B cell (primary cell): ENCODE measurements at regions of chr1 and their contacts with region 1.

Region 1: GRCh38 chr1:226051356-226051755 is 11.2 kb upstream of the H3-3A start:
- DNase-seq: no peak
- ATAC-seq: no peak
- H3K4me3 ChIP-seq: no peak overlapping the region
- H3K4me3 Mint-ChIP-seq: no peak overlapping the region
- H3K27ac ChIP-seq: no peak overlapping the region
- H3K27ac Mint-ChIP-seq: no peak overlapping the region
- H3K4me1 ChIP-seq: no peaks in the 10 kb centered on the region
- H3K4me1 Mint-ChIP-seq: no peaks in the 10 kb centered on the region
- H3K27me3 ChIP-seq: no peaks in the 10 kb centered on the region
- H3K27me3 Mint-ChIP-seq: no peaks in the 10 kb centered on the region
- CTCF ChIP-seq: no peak

Region 2: GRCh38 chr1:225485991-225486530 is 565.3 kb before region 1 on chr1:
- CTCF ChIA-PET with region 1: no interaction called
- POLR2A ChIA-PET with region 1: interaction called, 12 read pairs
- intact Hi-C with region 1: no loop called
- DNase-seq: no peak
- ATAC-seq: no peak
- H3K4me3 ChIP-seq: no peak overlapping the region
- H3K4me3 Mint-ChIP-seq: no peak overlapping the region
- H3K27ac ChIP-seq: no peak overlapping the region
- H3K27ac Mint-ChIP-seq: no peak overlapping the region
- H3K4me1 ChIP-seq: peaks cover 8 to 11% of the 10 kb centered on the region in 2 donors
- H3K4me1 Mint-ChIP-seq: peaks cover 16% of the 10 kb centered on the region
- H3K27me3 ChIP-seq: no peaks in the 10 kb centered on the region
- H3K27me3 Mint-ChIP-seq: peaks cover 3% of the 10 kb centered on the region
- CTCF ChIP-seq: no peak

Region 3: DNA sequence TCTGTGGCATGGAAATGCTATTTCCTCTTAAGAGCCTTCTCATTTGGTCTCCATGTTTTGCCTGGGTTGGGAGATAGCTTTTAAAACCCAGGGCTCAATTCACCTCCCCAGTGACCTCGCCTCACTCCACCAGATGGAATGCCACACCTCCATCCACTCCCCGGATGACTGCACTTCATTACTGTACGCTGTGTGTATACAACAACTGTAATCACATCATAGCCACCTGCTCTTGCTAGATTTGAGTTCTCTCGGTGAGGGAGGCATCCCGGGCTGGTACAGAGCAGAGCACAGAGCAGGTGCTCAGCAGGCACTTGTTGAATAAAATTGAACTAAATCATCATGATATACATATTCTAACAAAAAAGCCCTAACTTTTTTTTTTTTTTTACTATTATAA is 78.2 kb before region 1 on chr1:
- CTCF ChIA-PET with region 1: no interaction called
- POLR2A ChIA-PET with region 1: no interaction called
- intact Hi-C with region 1: no loop called
- DNase-seq: no peak
- ATAC-seq: no peak
- H3K4me3 ChIP-seq: no peak overlapping the region
- H3K4me3 Mint-ChIP-seq: no peak overlapping the region
- H3K27ac ChIP-seq: no peak overlapping the region
- H3K27ac Mint-ChIP-seq: no peak overlapping the region
- H3K4me1 ChIP-seq: peaks cover 10 to 17% of the 10 kb centered on the region in 2 donors
- H3K4me1 Mint-ChIP-seq: peaks cover 14% of the 10 kb centered on the region
- H3K27me3 ChIP-seq: no peaks in the 10 kb centered on the region
- H3K27me3 Mint-ChIP-seq: no peaks in the 10 kb centered on the region
- CTCF ChIP-seq: no peak

Region 4: DNA sequence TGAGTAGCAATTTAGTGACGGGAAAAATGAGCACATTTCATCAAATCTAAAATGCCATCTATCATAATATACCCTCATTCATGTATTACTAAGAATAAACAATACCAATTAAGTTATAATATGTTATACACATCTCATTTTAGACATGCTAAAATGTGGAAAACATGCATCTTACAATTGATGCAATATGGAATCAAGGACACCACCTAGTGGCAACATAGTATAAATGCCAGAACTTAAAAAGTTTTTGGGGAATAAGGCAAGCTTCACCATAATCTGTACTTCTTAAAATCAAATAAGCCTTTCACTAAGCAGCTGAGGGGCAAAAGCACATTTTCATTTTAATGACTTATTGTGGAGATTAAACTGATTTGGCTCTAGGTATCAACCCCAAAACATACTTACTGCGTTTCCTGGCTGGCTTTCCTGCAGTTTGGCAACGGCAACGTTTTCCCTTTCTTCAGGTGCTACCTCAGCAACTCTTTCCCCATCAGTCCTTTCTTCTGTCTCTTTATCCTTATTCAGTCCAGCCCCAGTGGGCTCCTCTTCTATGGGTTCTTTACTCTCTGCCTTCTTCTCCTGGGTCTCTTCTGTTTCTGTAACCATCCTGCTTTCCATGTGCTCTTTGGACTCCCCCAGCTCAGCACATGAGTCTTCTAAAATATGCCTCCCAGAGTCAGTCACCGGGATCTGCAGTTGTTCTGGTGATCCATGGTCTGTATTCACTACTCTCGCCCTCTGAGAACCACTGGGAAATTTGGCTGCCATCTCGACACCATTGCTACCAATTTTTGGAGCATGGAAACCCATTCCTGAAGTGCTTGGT is 63.7 kb before region 1 on chr1:
- CTCF ChIA-PET with region 1: interaction called, 11 read pairs
- POLR2A ChIA-PET with region 1: no interaction called
- intact Hi-C with region 1: no loop called
- DNase-seq: peak; percentile 61
- ATAC-seq: peak; percentile 67
- H3K4me3 ChIP-seq: no peak overlapping the region
- H3K4me3 Mint-ChIP-seq: no peak overlapping the region
- H3K27ac ChIP-seq: no peak overlapping the region
- H3K27ac Mint-ChIP-seq: peak overlapping the region; percentile 37
- H3K4me1 ChIP-seq: peaks cover 0 to 4% of the 10 kb centered on the region in 2 donors
- H3K4me1 Mint-ChIP-seq: peaks cover 25% of the 10 kb centered on the region
- H3K27me3 ChIP-seq: no peaks in the 10 kb centered on the region
- H3K27me3 Mint-ChIP-seq: no peaks in the 10 kb centered on the region
- CTCF ChIP-seq: peak; percentile 87

Region 5: DNA sequence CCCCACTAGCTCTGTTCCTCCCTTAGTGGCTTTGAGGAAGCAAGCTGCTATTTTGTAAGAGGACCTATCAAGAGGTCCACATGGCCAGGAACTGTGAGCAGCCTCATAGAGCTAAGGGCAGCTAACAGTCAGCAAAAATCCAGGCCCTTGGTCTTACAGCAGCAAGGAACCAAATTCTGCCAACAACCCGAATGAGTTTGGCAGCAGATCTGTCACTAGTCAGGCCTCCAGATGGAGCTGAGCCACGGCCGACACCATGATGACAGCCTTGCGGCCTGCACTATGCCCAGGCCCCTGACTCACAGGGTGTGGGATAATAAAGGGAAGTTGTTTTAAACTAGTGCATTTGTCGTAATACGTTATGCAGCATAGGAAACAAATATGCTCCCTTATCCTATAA is 16.9 kb before region 1 on chr1:
- CTCF ChIA-PET with region 1: interaction called, 5 read pairs
- POLR2A ChIA-PET with region 1: interaction called, 14 read pairs
- intact Hi-C with region 1: no loop called
- DNase-seq: peak; percentile 35
- ATAC-seq: peak; percentile 51
- H3K4me3 ChIP-seq: no peak overlapping the region
- H3K4me3 Mint-ChIP-seq: no peak overlapping the region
- H3K27ac ChIP-seq: no peak overlapping the region
- H3K27ac Mint-ChIP-seq: no peak overlapping the region
- H3K4me1 ChIP-seq: peaks cover 21 to 28% of the 10 kb centered on the region in 2 donors
- H3K4me1 Mint-ChIP-seq: peaks cover 29% of the 10 kb centered on the region
- H3K27me3 ChIP-seq: no peaks in the 10 kb centered on the region
- H3K27me3 Mint-ChIP-seq: no peaks in the 10 kb centered on the region
- CTCF ChIP-seq: no peak